ENCODE measurements at regions of chr3 and their contacts with region 1.

Region 1: DNA sequence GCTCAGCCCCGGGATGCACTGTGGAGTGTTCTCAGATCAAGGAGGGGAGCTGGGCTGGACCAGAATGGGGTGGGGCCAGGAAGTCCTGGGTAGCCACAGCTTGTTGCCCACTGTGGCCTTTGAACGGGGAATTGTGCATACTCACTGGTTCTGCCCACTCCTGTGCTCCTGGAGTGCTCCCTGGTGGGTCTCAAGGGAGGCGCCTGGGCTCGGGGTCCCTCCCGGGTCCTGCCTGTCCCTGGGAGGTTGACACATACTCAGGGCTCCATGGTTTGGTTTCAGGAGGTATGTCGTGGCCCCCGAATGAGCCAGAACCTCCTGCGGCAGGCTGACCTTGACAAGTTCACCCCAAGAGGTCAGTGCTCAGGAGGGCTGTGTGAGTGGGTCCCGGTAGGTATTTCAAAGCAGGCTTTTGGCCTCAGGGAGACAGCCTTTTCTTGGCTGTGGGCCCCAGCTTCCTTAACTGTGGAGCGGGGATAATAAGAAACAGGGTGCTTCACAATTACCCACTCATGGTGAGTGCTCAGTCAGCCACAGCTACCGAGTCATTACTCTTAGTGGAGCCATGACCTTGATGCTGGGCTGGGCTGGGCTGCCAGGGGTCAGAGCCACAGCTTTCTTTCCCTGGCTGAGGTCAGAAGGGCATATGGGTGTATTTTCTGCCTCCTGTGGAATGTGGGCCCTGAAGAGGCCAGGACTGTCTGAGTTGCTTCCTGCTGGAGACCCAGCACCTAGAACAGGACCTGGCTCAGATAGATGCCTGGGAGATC is 7.6 kb downstream of the DNAH1 start:
- DNase-seq: no peak
- H3K4me3 ChIP-seq: no peak overlapping the region
- H3K27ac ChIP-seq: no peak overlapping the region; a peak in 1 of 4 replicates
- H3K4me1 ChIP-seq: peaks cover 0 to 21% of the 10 kb centered on the region in 2 experiments; a peak in 1 of 4 replicates
- H3K27me3 ChIP-seq: no peaks in the 10 kb centered on the region
- CTCF ChIP-seq: no peak
- EP300 ChIP-seq: no peak
- RAD21 ChIP-seq: no peak

Region 2: GRCh38 chr3:52231502-52232293 is 92.0 kb before region 1 on chr3:
- CTCF ChIA-PET with region 1: interaction called, 10 read pairs
- POLR2A ChIA-PET with region 1: no interaction called
- DNase-seq: peak; percentile 90
- H3K4me3 ChIP-seq: no peak overlapping the region
- H3K27ac ChIP-seq: no peak overlapping the region
- H3K4me1 ChIP-seq: peaks cover 2 to 15% of the 10 kb centered on the region in 2 experiments; a peak in 3 of 4 replicates
- H3K27me3 ChIP-seq: no peaks in the 10 kb centered on the region
- CTCF ChIP-seq: peak; percentile 75
- EP300 ChIP-seq: no peak
- RAD21 ChIP-seq: peak; percentile 62

Region 3: DNA sequence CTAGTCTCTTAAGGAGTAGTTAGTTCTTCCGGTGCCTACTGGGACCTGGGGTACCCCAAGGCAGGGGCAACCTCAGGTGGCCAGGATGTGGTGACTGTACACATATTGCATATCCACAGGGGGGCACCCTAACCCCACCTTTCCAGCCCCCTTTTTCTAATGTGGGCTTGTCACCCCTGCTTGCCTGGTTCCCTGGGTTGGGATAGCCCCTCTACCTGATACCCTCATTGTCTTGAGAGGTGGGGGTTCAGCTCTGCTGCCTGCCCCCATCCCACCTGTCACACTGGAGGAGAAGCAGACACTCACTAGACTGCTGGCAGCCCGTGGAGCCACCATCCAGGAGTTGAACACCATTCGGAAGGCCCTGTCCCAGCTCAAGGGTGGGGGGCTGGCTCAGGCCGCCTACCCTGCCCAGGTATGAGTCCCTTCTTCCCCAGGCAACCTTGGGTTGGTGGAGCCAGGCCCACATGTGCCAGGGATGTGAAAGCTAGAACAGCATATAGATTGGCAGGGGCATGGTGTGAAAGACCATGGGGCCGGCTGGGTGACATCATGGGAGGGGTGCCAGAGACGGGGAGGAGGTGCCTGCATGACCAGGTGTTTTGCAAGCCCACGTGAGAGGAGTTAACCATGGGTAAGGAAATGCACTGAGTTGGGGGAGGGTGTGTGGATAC is 32.1 kb before region 1 on chr3:
- CTCF ChIA-PET with region 1: interaction called, 504 read pairs
- POLR2A ChIA-PET with region 1: no interaction called
- DNase-seq: peak; percentile 80
- H3K4me3 ChIP-seq: no peak overlapping the region
- H3K27ac ChIP-seq: no peak overlapping the region
- H3K4me1 ChIP-seq: peaks cover 0 to 38% of the 10 kb centered on the region in 2 experiments; a peak in 2 of 4 replicates
- H3K27me3 ChIP-seq: no peaks in the 10 kb centered on the region
- CTCF ChIP-seq: peak; percentile 71
- EP300 ChIP-seq: no peak
- RAD21 ChIP-seq: peak; percentile 93